ENCODE measurements at regions of chr13 and their contacts with region 1.

Region 1: DNA sequence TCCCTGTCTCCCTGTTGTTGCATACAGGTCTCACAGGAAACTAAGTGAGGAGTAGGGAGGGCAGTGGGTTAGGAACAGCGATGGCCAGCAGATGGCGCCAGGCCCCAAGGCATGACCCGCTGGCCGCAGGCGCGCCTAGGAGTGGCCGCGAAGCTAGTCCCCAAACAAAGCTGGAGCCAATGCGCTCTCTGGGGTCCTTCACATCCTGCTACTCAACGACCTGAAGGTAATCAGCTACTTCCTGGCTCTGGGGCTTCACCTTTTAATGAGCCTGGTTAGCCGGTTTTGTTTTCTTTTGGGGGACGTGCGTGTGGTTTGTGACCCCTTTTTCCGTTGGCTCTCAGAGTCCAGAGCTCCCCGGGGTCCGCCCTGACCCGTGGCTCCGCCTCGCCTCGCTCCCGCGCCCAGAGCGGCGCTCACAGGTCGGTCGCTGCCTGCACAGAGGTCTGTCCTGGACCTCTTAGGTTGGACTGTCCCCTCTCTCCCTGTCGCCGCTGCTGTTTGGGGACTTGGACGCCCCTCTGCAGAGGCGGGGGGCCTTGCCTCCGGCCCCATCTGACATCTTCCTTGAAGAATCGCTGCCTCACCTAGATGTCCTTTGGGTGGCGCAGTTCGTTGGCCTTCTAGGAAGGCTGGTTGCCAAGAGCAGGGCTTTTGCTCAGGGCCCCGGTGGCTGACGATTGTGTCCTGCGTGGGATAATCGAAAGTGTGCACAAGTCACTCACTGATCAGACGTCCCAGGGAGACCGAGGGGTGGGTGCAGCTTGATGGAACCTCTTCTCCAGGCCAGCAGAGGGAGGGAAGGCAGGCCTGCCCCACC is 62.1 kb upstream of the GTF3A start:
- DNase-seq: peak; percentile 67 to 79 (median 69)
- H3K4me3 ChIP-seq: peak overlapping the region; percentile 58
- H3K4me3 Mint-ChIP-seq: peak overlapping the region; percentile 37 to 86 (median 56)
- H3K27ac ChIP-seq: no peak overlapping the region
- H3K27ac Mint-ChIP-seq: peak overlapping the region in 2 of 8 donors; percentile 56 to 79
- H3K4me1 ChIP-seq: peaks cover 8% of the 10 kb centered on the region
- H3K4me1 Mint-ChIP-seq: peaks cover 3 to 6% (median 6%) of the 10 kb centered on the region in 3 donors
- H3K27me3 ChIP-seq: peaks cover 4% of the 10 kb centered on the region
- H3K27me3 Mint-ChIP-seq: peaks cover 12 to 28% of the 10 kb centered on the region in 2 donors

Region 2: GRCh38 chr13:26971990-26972887 is 390.0 kb before region 1 on chr13:
- CTCF ChIA-PET with region 1: interaction called, 10 read pairs
- POLR2A ChIA-PET with region 1: no interaction called
- DNase-seq: no peak
- H3K4me3 ChIP-seq: no peak overlapping the region
- H3K4me3 Mint-ChIP-seq: no peak overlapping the region
- H3K27ac ChIP-seq: no peak overlapping the region
- H3K27ac Mint-ChIP-seq: peak overlapping the region in 4 of 8 donors; percentile 21 to 75 (median 58)
- H3K4me1 ChIP-seq: no peaks in the 10 kb centered on the region
- H3K4me1 Mint-ChIP-seq: peaks cover 4 to 9% (median 6%) of the 10 kb centered on the region in 3 donors
- H3K27me3 ChIP-seq: no peaks in the 10 kb centered on the region
- H3K27me3 Mint-ChIP-seq: peaks cover 0 to 5% of the 10 kb centered on the region in 2 donors

Region 3: DNA sequence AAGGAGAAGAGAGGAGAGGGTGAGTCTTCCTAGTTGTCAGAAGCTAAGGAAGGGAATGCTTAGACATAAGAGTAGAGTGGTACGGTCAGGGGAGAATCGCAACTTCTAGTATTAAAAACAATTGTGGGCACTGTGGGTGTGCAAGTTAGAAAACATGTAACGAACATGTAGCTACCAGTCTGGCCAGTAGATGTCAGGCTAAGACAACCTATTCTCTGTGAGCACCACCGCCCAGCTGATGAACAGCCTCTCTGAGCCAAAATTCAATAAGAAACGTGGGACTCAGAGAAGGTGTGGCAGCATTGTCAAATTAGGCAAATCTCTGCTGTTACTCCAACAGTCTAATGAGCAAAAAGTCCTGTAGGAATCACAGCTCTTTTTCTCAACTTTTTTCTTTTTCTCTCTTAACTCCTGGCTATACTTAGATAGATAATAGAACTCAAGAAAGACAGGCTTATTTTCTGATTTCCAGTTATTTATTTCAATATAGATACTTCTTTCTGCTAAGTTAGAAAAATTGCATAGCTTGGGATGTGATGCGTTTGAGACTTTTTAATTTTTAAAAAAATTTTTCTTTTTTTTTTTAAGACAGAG is 376.9 kb before region 1 on chr13:
- CTCF ChIA-PET with region 1: interaction called, 132 read pairs
- POLR2A ChIA-PET with region 1: interaction called, 5 read pairs
- DNase-seq: peak; percentile 40 to 75 (median 61)
- H3K4me3 ChIP-seq: no peak overlapping the region
- H3K4me3 Mint-ChIP-seq: no peak overlapping the region
- H3K27ac ChIP-seq: no peak overlapping the region
- H3K27ac Mint-ChIP-seq: no peak overlapping the region
- H3K4me1 ChIP-seq: no peaks in the 10 kb centered on the region
- H3K4me1 Mint-ChIP-seq: peaks cover 2 to 3% (median 3%) of the 10 kb centered on the region in 3 donors
- H3K27me3 ChIP-seq: no peaks in the 10 kb centered on the region
- H3K27me3 Mint-ChIP-seq: peaks cover 18 to 21% of the 10 kb centered on the region in 2 donors

Region 4: GRCh38 chr13:27151798-27152599 is 210.3 kb before region 1 on chr13:
- CTCF ChIA-PET with region 1: no interaction called
- POLR2A ChIA-PET with region 1: no interaction called
- DNase-seq: no peak
- H3K4me3 ChIP-seq: no peak overlapping the region
- H3K4me3 Mint-ChIP-seq: peak overlapping the region in 1 of 7 donors; percentile 13
- H3K27ac ChIP-seq: no peak overlapping the region
- H3K27ac Mint-ChIP-seq: peak overlapping the region in 2 of 8 donors; percentile 44 to 56
- H3K4me1 ChIP-seq: peaks cover 13% of the 10 kb centered on the region
- H3K4me1 Mint-ChIP-seq: peaks cover 58 to 81% (median 78%) of the 10 kb centered on the region in 3 donors
- H3K27me3 ChIP-seq: no peaks in the 10 kb centered on the region
- H3K27me3 Mint-ChIP-seq: no peaks in the 10 kb centered on the region

Region 5: DNA sequence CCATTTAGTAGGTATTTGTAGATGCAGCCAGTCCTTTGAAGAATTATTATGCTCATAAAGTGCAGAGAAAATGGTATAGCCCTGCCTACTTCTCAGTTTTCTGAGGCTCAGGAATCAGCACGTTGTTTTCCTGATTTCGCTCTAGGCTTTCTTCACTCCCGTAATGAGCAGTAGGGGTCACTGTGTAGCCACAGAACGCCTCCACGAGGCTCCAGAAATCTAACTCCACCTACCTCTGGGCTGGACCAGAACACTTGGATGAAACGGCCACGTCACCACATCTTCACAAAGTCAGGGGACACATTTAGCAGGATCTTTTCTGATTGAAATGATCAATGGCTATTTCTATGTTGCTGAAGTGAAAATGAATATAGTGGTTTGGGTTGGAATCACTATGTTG is 12.4 kb after region 1 on chr13:
- CTCF ChIA-PET with region 1: interaction called, 24 read pairs
- POLR2A ChIA-PET with region 1: no interaction called
- DNase-seq: peak in 4 of 5 donors; percentile 28 to 65 (median 42)
- H3K4me3 ChIP-seq: no peak overlapping the region
- H3K4me3 Mint-ChIP-seq: no peak overlapping the region
- H3K27ac ChIP-seq: no peak overlapping the region
- H3K27ac Mint-ChIP-seq: no peak overlapping the region
- H3K4me1 ChIP-seq: no peaks in the 10 kb centered on the region
- H3K4me1 Mint-ChIP-seq: peaks cover 4 to 7% (median 6%) of the 10 kb centered on the region in 3 donors
- H3K27me3 ChIP-seq: no peaks in the 10 kb centered on the region
- H3K27me3 Mint-ChIP-seq: peaks cover 15 to 44% of the 10 kb centered on the region in 2 donors

Region 6: GRCh38 chr13:27607125-27607524 is 244.9 kb after region 1 on chr13:
- CTCF ChIA-PET with region 1: no interaction called
- POLR2A ChIA-PET with region 1: no interaction called
- DNase-seq: no peak
- H3K4me3 ChIP-seq: no peak overlapping the region
- H3K4me3 Mint-ChIP-seq: no peak overlapping the region
- H3K27ac ChIP-seq: no peak overlapping the region
- H3K27ac Mint-ChIP-seq: no peak overlapping the region
- H3K4me1 ChIP-seq: peaks cover 2% of the 10 kb centered on the region
- H3K4me1 Mint-ChIP-seq: peaks cover 34 to 53% (median 49%) of the 10 kb centered on the region in 3 donors
- H3K27me3 ChIP-seq: no peaks in the 10 kb centered on the region
- H3K27me3 Mint-ChIP-seq: no peaks in the 10 kb centered on the region

Region 7: DNA sequence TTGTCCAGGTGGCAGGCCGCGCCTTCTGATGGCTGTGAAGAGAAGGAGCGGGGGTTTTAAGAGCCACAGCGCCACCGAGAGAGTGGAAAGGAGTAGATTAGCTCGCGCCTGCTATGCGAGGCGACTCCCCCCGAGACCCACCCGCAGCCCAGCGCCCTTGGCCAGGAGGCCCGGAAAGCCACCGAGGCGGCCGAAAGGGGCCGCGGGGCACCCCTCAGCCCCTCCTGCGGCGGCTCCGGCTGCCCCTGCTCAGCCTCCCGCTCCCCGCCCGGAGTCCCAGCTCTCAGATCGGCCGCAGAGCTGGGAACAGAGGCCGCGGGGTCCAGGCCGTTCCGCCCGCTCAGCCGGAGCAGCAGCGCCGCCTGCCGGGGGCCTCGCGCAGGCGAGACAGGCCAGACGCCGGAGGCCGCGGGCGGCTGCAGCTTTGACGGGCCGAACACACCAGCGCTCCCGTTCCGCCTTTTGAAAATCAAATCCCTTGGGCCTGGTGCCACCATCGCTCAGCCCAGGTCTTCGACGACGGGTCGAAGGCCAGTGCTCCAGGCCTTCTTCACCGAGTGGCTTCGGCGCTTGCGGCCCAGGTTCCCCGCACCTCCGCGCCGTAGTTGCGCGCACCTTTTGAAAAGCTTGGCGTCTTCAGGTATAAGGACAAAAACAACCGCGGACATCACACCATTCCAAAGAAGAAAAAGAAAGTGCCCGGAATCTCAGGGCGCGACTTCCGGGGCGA is 591.6 kb after region 1 on chr13:
- CTCF ChIA-PET with region 1: interaction called, 10 read pairs
- POLR2A ChIA-PET with region 1: no interaction called
- DNase-seq: peak in 4 of 5 donors; percentile 30 to 54 (median 32)
- H3K4me3 ChIP-seq: peak overlapping the region; percentile 22
- H3K4me3 Mint-ChIP-seq: peak overlapping the region; percentile 58 to 86 (median 70)
- H3K27ac ChIP-seq: no peak overlapping the region
- H3K27ac Mint-ChIP-seq: no peak overlapping the region
- H3K4me1 ChIP-seq: peaks cover 6% of the 10 kb centered on the region
- H3K4me1 Mint-ChIP-seq: peaks cover 8 to 22% (median 10%) of the 10 kb centered on the region in 3 donors
- H3K27me3 ChIP-seq: peaks cover 28% of the 10 kb centered on the region
- H3K27me3 Mint-ChIP-seq: peaks cover 50 to 73% of the 10 kb centered on the region in 2 donors

Region 8: GRCh38 chr13:27980280-27980998 is 618.2 kb after region 1 on chr13:
- CTCF ChIA-PET with region 1: interaction called, 75 read pairs
- POLR2A ChIA-PET with region 1: no interaction called
- DNase-seq: no peak
- H3K4me3 ChIP-seq: no peak overlapping the region
- H3K4me3 Mint-ChIP-seq: peak overlapping the region in 5 of 7 donors; percentile 50 to 88 (median 63)
- H3K27ac ChIP-seq: no peak overlapping the region
- H3K27ac Mint-ChIP-seq: peak overlapping the region in 1 of 8 donors; percentile 41
- H3K4me1 ChIP-seq: peaks cover 4% of the 10 kb centered on the region
- H3K4me1 Mint-ChIP-seq: peaks cover 11 to 34% (median 21%) of the 10 kb centered on the region in 3 donors
- H3K27me3 ChIP-seq: peaks cover 28% of the 10 kb centered on the region
- H3K27me3 Mint-ChIP-seq: peaks cover 52 to 76% of the 10 kb centered on the region in 2 donors

Measured in CD8-positive, alpha-beta memory T cell (primary cell).